Activated T-helper 2 cell treated with anti-CD3 and anti-CD28 coated beads, Interferon-gamma antibody, Interleukin-2, Interleukin-4, amounts not matched to agents 10 μg/mL and 5 μg/mL and 100 μg/mL, durations not matched to agents 14 hours and 24 hours and 36 hours (primary cell): ENCODE measurements at regions of chr6 and their contacts with region 1.

Region 1: DNA sequence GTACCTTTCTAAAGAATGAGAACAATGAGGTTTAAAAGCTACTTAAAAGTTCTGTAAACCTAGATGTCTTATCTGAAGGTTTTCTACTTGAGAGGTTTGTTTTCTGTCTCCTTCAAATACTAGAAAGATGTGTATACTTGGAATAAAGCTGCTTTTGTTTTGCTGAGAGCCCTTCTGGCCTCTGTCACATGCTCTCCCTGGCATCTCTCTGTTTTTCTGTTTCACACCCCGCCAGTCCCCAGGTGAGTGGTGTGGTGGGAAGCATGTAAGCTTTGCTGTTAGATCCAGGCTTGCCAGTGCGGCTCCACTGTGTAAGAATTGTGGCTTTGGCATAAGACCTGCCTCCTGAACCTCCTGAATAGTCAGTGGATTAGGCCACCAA is 56.8 kb downstream of the SNX9 start:
- DNase-seq: no peak
- H3K4me3 Mint-ChIP-seq: no peak overlapping the region
- H3K27ac Mint-ChIP-seq: no peak overlapping the region
- H3K4me1 Mint-ChIP-seq: peaks cover 59% of the 10 kb centered on the region
- H3K27me3 Mint-ChIP-seq: peaks cover 5% of the 10 kb centered on the region

Region 2: GRCh38 chr6:158057213-158057987 is 177.5 kb after region 1 on chr6:
- intact Hi-C with region 1: loop called (anchors 10 kb)
- DNase-seq: no peak
- H3K4me3 Mint-ChIP-seq: no peak overlapping the region
- H3K27ac Mint-ChIP-seq: peak overlapping the region; percentile 4
- H3K4me1 Mint-ChIP-seq: peaks cover 24% of the 10 kb centered on the region
- H3K27me3 Mint-ChIP-seq: no peaks in the 10 kb centered on the region